H1 (cell line): ENCODE measurements at regions of chr15 and their contacts with region 1.

Region 1: GRCh38 chr15:43517354-43518196 is at the start of gene MAP1A:
- DNase-seq: peak in 1 of 2 experiments; percentile 63
- H3K4me3 ChIP-seq: peak within 1 kb of the TSS; percentile 41 to 72 (median 52)
- H3K27ac ChIP-seq: no peak within 1 kb of the TSS
- H3K4me1 ChIP-seq: peaks cover 11 to 21% (median 13%) of the 10 kb centered on the region in 4 experiments; a peak in 6 of 7 replicates
- H3K27me3 ChIP-seq: peaks cover 0 to 36% (median 25%) of the 10 kb centered on the region in 4 experiments; a peak in 6 of 7 replicates
- CTCF ChIP-seq: peak in 1 of 3 experiments; percentile 8; a peak in 1 of 4 replicates
- EP300 ChIP-seq: no peak
- POLR2A ChIP-seq: no peak
- RAD21 ChIP-seq: no peak
- total RNA-seq, gene MAP1A: 2.4 and 3.4 TPM in 2 replicates

Region 2: DNA sequence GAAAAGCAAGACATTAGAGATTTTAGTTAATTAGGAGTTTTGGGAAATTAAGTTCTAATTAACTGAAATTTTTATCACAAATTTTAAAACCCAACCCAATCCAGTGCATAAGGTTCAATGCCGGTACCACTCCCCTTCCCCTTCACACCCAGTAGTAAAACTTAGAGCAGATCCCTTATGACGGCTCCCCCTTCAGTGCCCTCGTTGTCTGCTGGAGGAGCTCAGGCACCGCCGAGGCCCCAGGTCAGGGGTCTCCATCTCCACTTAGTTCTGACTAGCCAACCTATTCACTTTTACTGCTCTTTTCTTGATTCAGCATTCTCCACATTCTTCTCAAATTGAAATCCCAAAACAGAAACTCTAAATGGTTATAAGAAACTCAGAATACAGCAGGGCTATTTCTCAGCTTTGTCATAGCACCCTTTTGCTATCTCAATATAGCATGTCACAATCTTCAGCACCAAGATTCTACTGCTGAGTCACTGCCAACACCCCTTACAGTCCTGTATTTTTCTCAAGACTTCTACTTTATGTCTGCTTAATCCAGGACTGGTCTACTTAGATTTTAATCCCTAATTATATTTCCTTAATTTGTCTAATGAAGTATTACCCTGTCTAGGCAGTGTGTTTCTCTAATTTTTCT is 106.9 kb before region 1 on chr15:
- CTCF ChIA-PET with region 1: no interaction called
- POLR2A ChIA-PET with region 1: no interaction called
- DNase-seq: no peak
- H3K4me3 ChIP-seq: no peak overlapping the region
- H3K27ac ChIP-seq: no peak overlapping the region
- H3K4me1 ChIP-seq: no peaks in the 10 kb centered on the region
- H3K27me3 ChIP-seq: no peaks in the 10 kb centered on the region
- CTCF ChIP-seq: no peak
- EP300 ChIP-seq: no peak
- POLR2A ChIP-seq: no peak
- RAD21 ChIP-seq: no peak

Region 3: GRCh38 chr15:43531018-43531670 is 13.6 kb after region 1 on chr15:
- CTCF ChIA-PET with region 1: interaction called, 34 read pairs
- POLR2A ChIA-PET with region 1: interaction called, 8 read pairs
- DNase-seq: no peak
- H3K4me3 ChIP-seq: no peak overlapping the region
- H3K27ac ChIP-seq: no peak overlapping the region
- H3K4me1 ChIP-seq: peaks cover 0 to 12% (median 2%) of the 10 kb centered on the region in 4 experiments; a peak in 4 of 7 replicates
- H3K27me3 ChIP-seq: no peaks in the 10 kb centered on the region; a peak in 1 of 7 replicates
- CTCF ChIP-seq: 0 out of 4 replicates have a peak, but pooled peaks of 1 of the 3 experiments have one; percentile 2
- EP300 ChIP-seq: no peak
- POLR2A ChIP-seq: no peak
- RAD21 ChIP-seq: no peak

Region 4: GRCh38 chr15:43648649-43649429 is 131.3 kb after region 1 on chr15 and contains the start of gene CATSPER2:
- CTCF ChIA-PET with region 1: no interaction called
- POLR2A ChIA-PET with region 1: no interaction called
- DNase-seq: no peak
- H3K4me3 ChIP-seq: no peak within 1 kb of the TSS
- H3K27ac ChIP-seq: no peak within 1 kb of the TSS
- H3K4me1 ChIP-seq: no peaks in the 10 kb centered on the region
- H3K27me3 ChIP-seq: no peaks in the 10 kb centered on the region
- CTCF ChIP-seq: no peak
- EP300 ChIP-seq: no peak
- POLR2A ChIP-seq: no peak
- RAD21 ChIP-seq: no peak
- total RNA-seq, gene CATSPER2: 1.2 TPM in 2 replicates

Region 5: GRCh38 chr15:43886558-43886957 is 369.0 kb after region 1 on chr15:
- CTCF ChIA-PET with region 1: no interaction called
- POLR2A ChIA-PET with region 1: no interaction called
- DNase-seq: no peak
- H3K4me3 ChIP-seq: no peak overlapping the region
- H3K27ac ChIP-seq: no peak overlapping the region
- H3K4me1 ChIP-seq: peaks cover 0 to 2% (median under 1%) of the 10 kb centered on the region in 4 experiments; a peak in 3 of 7 replicates
- H3K27me3 ChIP-seq: no peaks in the 10 kb centered on the region
- CTCF ChIP-seq: no peak
- EP300 ChIP-seq: no peak
- POLR2A ChIP-seq: no peak
- RAD21 ChIP-seq: no peak